Heart right ventricle (tissue), 16 donors: ENCODE measurements at regions of chr5 and their contacts with region 1.

Region 1: GRCh38 chr5:45639038-45639437 is 57.1 kb downstream of the HCN1 start:
- DNase-seq: no peak
- ATAC-seq: no peak
- H3K4me3 ChIP-seq: no peak overlapping the region
- H3K27ac ChIP-seq: no peak overlapping the region
- H3K4me1 ChIP-seq: no peaks in the 10 kb centered on the region
- H3K27me3 ChIP-seq: no peaks in the 10 kb centered on the region
- CTCF ChIP-seq: peak in 6 of 9 donors; percentile 16 to 40 (median 34)

Region 2: DNA sequence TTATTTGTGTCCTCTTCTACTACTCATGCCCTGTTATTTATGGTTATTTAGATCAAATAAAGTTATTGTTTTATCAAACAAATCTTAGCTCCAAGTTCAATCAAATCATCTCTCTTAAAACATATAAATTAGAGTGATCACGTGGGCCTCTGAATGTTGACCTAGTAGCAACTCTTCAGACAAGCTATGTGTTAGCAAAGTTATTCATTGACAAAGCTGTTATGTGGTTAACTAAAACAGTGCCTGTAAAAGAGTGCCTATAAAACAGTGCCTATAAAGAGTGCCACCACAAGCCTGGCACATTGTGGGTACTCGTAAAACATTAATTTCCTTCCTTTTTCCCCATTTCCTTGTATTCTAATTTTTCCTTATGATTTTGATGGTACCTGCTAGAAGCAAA is 364.8 kb before region 1 on chr5:
- intact Hi-C with region 1: no loop called
- DNase-seq: no peak
- ATAC-seq: no peak
- H3K4me3 ChIP-seq: no peak overlapping the region
- H3K27ac ChIP-seq: no peak overlapping the region
- H3K4me1 ChIP-seq: no peaks in the 10 kb centered on the region
- H3K27me3 ChIP-seq: no peaks in the 10 kb centered on the region
- CTCF ChIP-seq: no peak

Region 3: GRCh38 chr5:45532826-45533624 is 106.0 kb before region 1 on chr5:
- intact Hi-C with region 1: loop called in 1 of 10 experiments (anchors 10 kb)
- DNase-seq: peak in 1 of 2 donors; percentile 30
- ATAC-seq: peak in 6 of 8 donors; percentile 64 to 88 (median 84)
- H3K4me3 ChIP-seq: no peak overlapping the region
- H3K27ac ChIP-seq: peak overlapping the region in 1 of 10 donors; percentile 6
- H3K4me1 ChIP-seq: peaks cover 0 to 4% (median 0%) of the 10 kb centered on the region in 9 donors
- H3K27me3 ChIP-seq: no peaks in the 10 kb centered on the region
- CTCF ChIP-seq: no peak